ENCODE measurements at regions of chr3 and their contacts with region 1.

Region 1: DNA sequence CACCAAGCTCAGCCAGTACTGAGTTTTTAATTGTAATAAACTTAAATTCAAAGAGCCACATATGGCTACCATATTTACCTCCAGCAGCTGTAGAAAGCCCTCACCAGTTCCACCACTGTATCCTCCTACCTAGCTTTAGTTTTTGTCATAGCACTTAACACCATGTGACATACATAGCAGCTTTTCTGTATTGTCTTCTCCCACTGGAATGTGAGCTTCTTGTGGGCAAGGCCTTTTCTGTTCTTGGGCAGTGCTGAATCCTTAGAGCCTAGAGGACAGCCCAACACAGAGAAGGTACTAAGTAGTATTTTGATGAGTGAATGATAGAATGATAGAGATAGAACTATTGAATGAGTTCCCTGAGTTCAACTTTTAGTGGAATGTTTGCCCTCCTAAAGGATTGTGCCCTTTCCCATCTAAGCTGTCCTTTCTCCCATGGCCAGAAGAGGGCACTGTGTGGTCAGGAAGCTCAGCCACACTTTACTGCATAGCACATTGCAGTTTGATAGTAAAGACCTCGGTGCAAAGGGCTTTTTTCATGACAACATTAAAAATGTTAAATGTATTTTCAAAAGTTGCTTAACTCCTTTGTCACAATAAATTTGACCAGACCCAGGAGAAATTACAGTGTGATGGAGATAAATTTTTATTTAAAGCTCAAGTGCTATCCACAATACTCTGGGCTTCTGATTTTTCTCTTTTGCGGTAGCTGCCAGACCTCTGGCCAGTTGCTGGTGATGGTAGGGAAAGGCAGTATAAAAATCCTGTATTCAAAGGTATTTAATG is 115.8 kb downstream of the GHSR start:
- DNase-seq: no peak
- ATAC-seq: peak; percentile 81 to 90 (median 86)
- H3K4me3 ChIP-seq: no peak overlapping the region
- H3K27ac ChIP-seq: no peak overlapping the region
- H3K4me1 ChIP-seq: no peaks in the 10 kb centered on the region
- H3K27me3 ChIP-seq: no peaks in the 10 kb centered on the region
- CTCF ChIP-seq: peak; percentile 92

Region 2: GRCh38 chr3:171936191-171936841 is 396.1 kb before region 1 on chr3:
- intact Hi-C with region 1: no loop called
- DNase-seq: peak in 1 of 2 donors; percentile 17
- ATAC-seq: peak in 1 of 4 donors; percentile 42
- H3K4me3 ChIP-seq: no peak overlapping the region
- H3K27ac ChIP-seq: no peak overlapping the region
- H3K4me1 ChIP-seq: no peaks in the 10 kb centered on the region
- H3K27me3 ChIP-seq: no peaks in the 10 kb centered on the region
- CTCF ChIP-seq: no peak

Region 3: DNA sequence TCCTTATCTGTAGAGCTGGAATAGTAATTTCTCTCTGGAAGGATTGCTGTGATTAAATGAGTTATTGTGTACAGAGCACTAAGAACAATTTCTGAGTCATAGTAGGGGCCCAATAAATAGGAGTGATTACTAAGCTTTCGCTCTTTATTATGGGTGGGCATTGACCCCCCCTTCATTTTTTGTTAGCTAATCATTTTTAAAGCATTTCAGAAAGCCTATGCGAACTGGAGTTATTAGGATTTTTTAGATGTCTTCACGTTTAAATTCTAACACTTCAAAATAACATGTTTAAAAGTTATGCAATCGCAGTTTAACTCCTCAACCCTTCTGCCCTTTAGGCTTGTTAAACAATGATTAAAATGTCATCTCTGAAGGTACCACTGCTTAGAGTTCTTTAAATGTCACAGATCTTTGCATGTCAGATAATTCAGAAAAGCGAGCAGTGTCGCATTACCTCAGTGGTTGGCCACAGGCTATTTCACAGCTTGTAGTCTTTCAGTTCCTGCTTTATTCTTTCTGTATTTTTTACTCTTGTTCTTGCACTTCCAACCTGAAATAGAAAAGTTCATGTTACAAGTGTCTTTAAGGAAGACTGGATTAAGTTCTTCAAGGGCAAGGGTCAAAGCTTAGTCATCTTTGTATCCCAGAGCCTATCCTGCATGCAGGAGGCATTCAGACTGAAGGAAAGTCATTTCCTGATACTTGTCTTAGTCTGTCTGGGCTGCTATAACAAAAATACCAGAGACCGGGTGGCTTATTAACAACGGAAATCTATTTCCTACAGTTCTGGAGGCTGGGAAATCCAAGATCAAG is 190.2 kb before region 1 on chr3:
- intact Hi-C with region 1: no loop called
- DNase-seq: no peak
- ATAC-seq: peak; percentile 38 to 60 (median 48)
- H3K4me3 ChIP-seq: no peak overlapping the region
- H3K27ac ChIP-seq: peak overlapping the region; percentile 79
- H3K4me1 ChIP-seq: peaks cover 63% of the 10 kb centered on the region
- H3K27me3 ChIP-seq: no peaks in the 10 kb centered on the region
- CTCF ChIP-seq: no peak

Region 4: DNA sequence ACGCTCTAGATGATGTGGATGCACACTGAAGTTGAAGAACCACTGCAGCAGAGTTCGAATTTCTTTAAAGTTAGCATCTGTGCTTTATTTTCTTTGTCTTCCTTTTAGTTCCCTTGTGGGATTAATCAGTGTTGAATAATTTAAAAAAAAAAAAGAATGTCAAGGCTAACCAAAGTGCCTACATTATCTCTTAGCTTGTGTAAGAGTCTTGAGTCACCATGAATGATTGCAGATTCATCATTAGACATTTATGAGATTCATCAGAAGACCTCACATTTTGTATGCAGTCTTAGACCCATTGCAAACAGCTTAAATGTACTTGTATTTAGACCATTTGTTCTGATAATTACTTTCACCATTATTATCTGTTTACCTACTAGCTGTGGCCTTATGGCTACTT is 110.9 kb before region 1 on chr3:
- intact Hi-C with region 1: no loop called
- DNase-seq: no peak
- ATAC-seq: no peak
- H3K4me3 ChIP-seq: no peak overlapping the region
- H3K27ac ChIP-seq: no peak overlapping the region
- H3K4me1 ChIP-seq: peaks cover 33% of the 10 kb centered on the region
- H3K27me3 ChIP-seq: no peaks in the 10 kb centered on the region
- CTCF ChIP-seq: no peak

Region 5: GRCh38 chr3:172476347-172476746 is 143.9 kb after region 1 on chr3:
- intact Hi-C with region 1: loop called in 1 of 2 experiments (anchors 5 kb)
- DNase-seq: no peak
- ATAC-seq: no peak
- H3K4me3 ChIP-seq: peak overlapping the region; percentile 55
- H3K27ac ChIP-seq: no peak overlapping the region
- H3K4me1 ChIP-seq: no peaks in the 10 kb centered on the region
- H3K27me3 ChIP-seq: no peaks in the 10 kb centered on the region
- CTCF ChIP-seq: no peak

Region 6: GRCh38 chr3:172666873-172667694 is 334.6 kb after region 1 on chr3:
- intact Hi-C with region 1: loop called in 1 of 2 experiments (anchors 10 kb)
- DNase-seq: peak; percentile 45 to 54
- ATAC-seq: peak; percentile 79 to 99 (median 92)
- H3K4me3 ChIP-seq: no peak overlapping the region
- H3K27ac ChIP-seq: no peak overlapping the region
- H3K4me1 ChIP-seq: peaks cover 3% of the 10 kb centered on the region
- H3K27me3 ChIP-seq: no peaks in the 10 kb centered on the region
- CTCF ChIP-seq: peak; percentile 82

Measured in psoas muscle (tissue), 8 donors.